Panc1 (cell line): ENCODE measurements at regions of chr2 and their contacts with region 1.

Region 1: DNA sequence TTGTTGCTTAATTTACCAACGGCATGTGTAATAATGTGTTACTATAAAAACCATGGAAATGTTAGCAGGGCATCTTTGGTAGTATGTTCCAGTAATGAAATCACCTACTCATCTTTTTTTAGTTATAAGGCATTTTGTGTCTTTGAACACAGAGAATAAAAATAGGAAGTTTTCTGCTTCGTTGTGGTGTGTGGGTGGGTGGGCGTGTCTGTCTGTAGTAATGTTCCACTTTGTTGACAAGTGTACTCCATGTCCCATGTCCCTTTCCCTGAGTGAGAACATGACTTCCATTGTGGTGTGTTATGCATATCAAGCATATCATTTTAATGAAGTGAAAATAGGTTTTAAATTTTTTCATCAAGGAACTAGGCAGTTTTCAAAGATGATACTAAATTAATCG is 149.3 kb downstream of the VWC2L start:
- DNase-seq: no peak
- ATAC-seq: no peak
- H3K4me3 ChIP-seq: no peak overlapping the region
- H3K27ac ChIP-seq: no peak overlapping the region
- H3K4me1 ChIP-seq: no peaks in the 10 kb centered on the region
- H3K27me3 ChIP-seq: no peaks in the 10 kb centered on the region
- CTCF ChIP-seq: no peak

Region 2: DNA sequence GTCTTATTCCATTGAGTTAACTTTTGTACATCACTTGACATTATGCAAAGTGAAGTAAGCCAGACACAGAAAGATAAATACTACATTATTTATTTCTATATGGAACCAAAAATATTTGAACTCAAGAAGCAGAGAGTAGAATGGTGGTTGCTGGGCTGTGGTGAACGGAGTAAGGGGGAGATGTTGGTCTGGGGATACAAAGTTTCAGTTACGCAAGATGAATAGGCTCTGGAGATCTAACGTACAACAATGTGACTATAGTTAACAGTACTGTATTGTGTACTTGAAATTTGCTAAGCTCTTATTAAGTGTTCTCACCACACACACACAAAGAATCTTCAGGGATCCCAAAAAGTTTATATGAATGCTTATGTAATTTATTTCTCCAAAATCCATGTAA is 274.2 kb before region 1 on chr2:
- CTCF ChIA-PET with region 1: no interaction called
- POLR2A ChIA-PET with region 1: interaction called, 10 read pairs
- in situ Hi-C with region 1: no loop called
- intact Hi-C with region 1: no loop called
- DNase-seq: no peak
- ATAC-seq: no peak
- H3K4me3 ChIP-seq: no peak overlapping the region
- H3K27ac ChIP-seq: no peak overlapping the region
- H3K4me1 ChIP-seq: no peaks in the 10 kb centered on the region
- H3K27me3 ChIP-seq: no peaks in the 10 kb centered on the region
- CTCF ChIP-seq: no peak